ENCODE measurements at regions of chr10 and their contacts with region 1.

Region 1: DNA sequence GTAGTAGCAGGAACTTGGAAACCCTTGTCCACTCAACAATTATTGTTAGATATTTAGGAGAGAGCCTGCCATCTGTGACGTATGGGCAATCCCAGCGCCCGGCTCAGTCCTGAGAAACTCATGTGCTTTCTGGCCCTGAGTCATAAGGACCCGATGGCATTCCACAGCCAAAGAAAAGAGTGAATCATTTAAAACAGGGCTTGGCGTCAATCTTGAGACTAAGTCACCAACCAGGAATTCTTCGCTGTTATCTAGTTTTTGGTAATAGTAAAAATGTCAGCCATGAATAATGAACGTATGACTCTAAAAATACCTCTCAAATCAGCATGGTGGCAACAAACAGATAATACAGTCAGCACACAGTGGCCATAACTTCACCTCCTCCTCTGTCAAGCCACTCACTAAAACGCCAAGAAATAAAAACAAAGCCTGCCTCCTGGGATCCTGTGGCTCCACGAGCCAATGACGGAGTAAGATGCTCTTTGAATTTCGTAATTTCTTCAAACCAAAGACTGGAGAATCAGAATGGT is 140.8 kb downstream of the ADAM12 start:
- DNase-seq: peak; percentile 94
- H3K4me3 Mint-ChIP-seq: peak overlapping the region; percentile 47
- H3K27ac Mint-ChIP-seq: peak overlapping the region; percentile 85
- H3K4me1 Mint-ChIP-seq: peaks cover 15% of the 10 kb centered on the region
- H3K27me3 Mint-ChIP-seq: no peaks in the 10 kb centered on the region
- CTCF ChIP-seq: no peak

Region 2: GRCh38 chr10:126110489-126111180 is 136.9 kb before region 1 on chr10:
- CTCF ChIA-PET with region 1: no interaction called
- POLR2A ChIA-PET with region 1: no interaction called
- intact Hi-C with region 1: no loop called
- DNase-seq: peak; percentile 26
- H3K4me3 Mint-ChIP-seq: no peak overlapping the region
- H3K27ac Mint-ChIP-seq: no peak overlapping the region
- H3K4me1 Mint-ChIP-seq: peaks cover 6% of the 10 kb centered on the region
- H3K27me3 Mint-ChIP-seq: no peaks in the 10 kb centered on the region
- CTCF ChIP-seq: no peak

Region 3: GRCh38 chr10:126199221-126199998 is 48.1 kb before region 1 on chr10:
- CTCF ChIA-PET with region 1: no interaction called
- POLR2A ChIA-PET with region 1: no interaction called
- intact Hi-C with region 1: loop called (anchors 2 kb)
- DNase-seq: peak; percentile 97
- H3K4me3 Mint-ChIP-seq: peak overlapping the region; percentile 45
- H3K27ac Mint-ChIP-seq: peak overlapping the region; percentile 72
- H3K4me1 Mint-ChIP-seq: peaks cover 7% of the 10 kb centered on the region
- H3K27me3 Mint-ChIP-seq: no peaks in the 10 kb centered on the region
- CTCF ChIP-seq: no peak

Region 4: GRCh38 chr10:126759531-126759930 is 512.0 kb after region 1 on chr10:
- CTCF ChIA-PET with region 1: no interaction called
- POLR2A ChIA-PET with region 1: no interaction called
- intact Hi-C with region 1: no loop called
- DNase-seq: no peak
- H3K4me3 Mint-ChIP-seq: no peak overlapping the region
- H3K27ac Mint-ChIP-seq: no peak overlapping the region
- H3K4me1 Mint-ChIP-seq: no peaks in the 10 kb centered on the region
- H3K27me3 Mint-ChIP-seq: peaks cover 25% of the 10 kb centered on the region
- CTCF ChIP-seq: no peak

Measured in MCF 10A (cell line).